ENCODE measurements at regions of chr1 and their contacts with region 1.

Region 1: DNA sequence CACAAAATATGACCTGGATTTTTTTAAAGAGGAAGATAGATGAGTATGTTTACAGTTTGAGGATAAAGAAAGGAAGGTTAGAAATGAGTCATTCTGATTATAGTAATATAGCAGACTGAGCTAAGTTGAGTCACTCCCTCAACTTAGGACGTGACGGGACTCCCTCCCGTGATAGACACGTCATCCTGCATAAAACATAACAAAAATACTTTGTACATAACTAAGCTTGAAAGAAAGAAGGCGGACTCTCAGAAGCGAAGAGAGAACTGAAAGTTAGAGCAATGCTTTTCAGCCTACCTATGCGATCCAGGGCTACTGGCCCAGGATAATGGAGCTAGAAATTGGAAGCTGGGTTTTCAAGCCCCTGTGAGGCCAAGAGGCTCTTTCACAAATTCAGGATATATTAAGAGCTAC is 53.0 kb upstream of the DESI2 start:
- DNase-seq: peak; percentile 64
- H3K4me3 Mint-ChIP-seq: peak overlapping the region; percentile 62
- H3K27ac Mint-ChIP-seq: peak overlapping the region; percentile 80
- H3K4me1 Mint-ChIP-seq: peaks cover 20% of the 10 kb centered on the region
- H3K27me3 Mint-ChIP-seq: no peaks in the 10 kb centered on the region
- CTCF ChIP-seq: no peak

Region 2: DNA sequence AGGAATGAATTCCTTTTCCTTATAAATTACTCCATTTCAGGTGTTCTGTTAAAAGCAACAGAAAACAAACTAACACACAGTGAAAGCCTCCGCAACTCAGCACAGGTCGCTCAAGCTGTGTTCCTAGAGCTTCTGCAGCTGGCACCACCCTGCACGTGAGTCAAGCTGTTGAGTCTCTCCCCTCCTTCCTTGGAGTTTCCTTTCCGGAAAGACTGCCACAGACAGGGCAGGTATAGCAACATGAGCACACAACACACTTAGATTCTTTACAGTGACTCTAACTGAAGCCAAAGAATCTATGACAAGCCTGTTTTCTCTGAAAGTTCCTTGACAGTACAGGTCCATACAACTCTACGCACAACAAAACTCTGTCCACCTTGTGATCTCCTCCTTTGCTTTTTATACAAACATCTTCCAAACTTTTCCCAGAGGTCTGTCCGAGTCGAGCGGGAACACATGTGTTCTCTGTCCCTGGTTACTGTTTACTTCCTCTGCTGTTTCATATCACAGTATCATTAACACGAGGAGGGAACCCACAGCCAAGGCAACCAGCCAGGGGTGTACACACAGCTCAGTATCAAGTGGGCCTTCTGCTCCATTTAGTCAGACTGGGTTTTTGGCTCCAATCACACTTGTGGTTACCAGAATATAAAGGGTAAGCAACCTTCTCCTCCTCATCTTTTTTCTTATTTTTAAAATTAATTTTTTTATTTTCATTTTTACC is 14.3 kb after region 1 on chr1:
- CTCF ChIA-PET with region 1: interaction called, 10 read pairs
- intact Hi-C with region 1: no loop called
- DNase-seq: peak; percentile 46
- H3K4me3 Mint-ChIP-seq: peak overlapping the region; percentile 5
- H3K27ac Mint-ChIP-seq: peak overlapping the region; percentile 46
- H3K4me1 Mint-ChIP-seq: peaks cover 25% of the 10 kb centered on the region
- H3K27me3 Mint-ChIP-seq: no peaks in the 10 kb centered on the region
- CTCF ChIP-seq: no peak

Region 3: GRCh38 chr1:244652699-244653466 is 52.9 kb after region 1 on chr1 and contains the start of gene DESI2:
- CTCF ChIA-PET with region 1: interaction called, 4 read pairs
- intact Hi-C with region 1: loop called (anchors 1 kb)
- DNase-seq: peak; percentile 98
- H3K4me3 Mint-ChIP-seq: no peak within 1 kb of the TSS
- H3K27ac Mint-ChIP-seq: no peak within 1 kb of the TSS
- H3K4me1 Mint-ChIP-seq: peaks cover 7% of the 10 kb centered on the region
- H3K27me3 Mint-ChIP-seq: peaks cover 20% of the 10 kb centered on the region
- CTCF ChIP-seq: peak; percentile 77
- total RNA-seq, gene DESI2: 29.8 and 39.1 TPM in 2 replicates

Region 4: GRCh38 chr1:244678697-244679096 is 78.8 kb after region 1 on chr1:
- CTCF ChIA-PET with region 1: no interaction called
- intact Hi-C with region 1: no loop called
- DNase-seq: no peak
- H3K4me3 Mint-ChIP-seq: no peak overlapping the region
- H3K27ac Mint-ChIP-seq: no peak overlapping the region
- H3K4me1 Mint-ChIP-seq: no peaks in the 10 kb centered on the region
- H3K27me3 Mint-ChIP-seq: no peaks in the 10 kb centered on the region
- CTCF ChIP-seq: no peak

Region 5: DNA sequence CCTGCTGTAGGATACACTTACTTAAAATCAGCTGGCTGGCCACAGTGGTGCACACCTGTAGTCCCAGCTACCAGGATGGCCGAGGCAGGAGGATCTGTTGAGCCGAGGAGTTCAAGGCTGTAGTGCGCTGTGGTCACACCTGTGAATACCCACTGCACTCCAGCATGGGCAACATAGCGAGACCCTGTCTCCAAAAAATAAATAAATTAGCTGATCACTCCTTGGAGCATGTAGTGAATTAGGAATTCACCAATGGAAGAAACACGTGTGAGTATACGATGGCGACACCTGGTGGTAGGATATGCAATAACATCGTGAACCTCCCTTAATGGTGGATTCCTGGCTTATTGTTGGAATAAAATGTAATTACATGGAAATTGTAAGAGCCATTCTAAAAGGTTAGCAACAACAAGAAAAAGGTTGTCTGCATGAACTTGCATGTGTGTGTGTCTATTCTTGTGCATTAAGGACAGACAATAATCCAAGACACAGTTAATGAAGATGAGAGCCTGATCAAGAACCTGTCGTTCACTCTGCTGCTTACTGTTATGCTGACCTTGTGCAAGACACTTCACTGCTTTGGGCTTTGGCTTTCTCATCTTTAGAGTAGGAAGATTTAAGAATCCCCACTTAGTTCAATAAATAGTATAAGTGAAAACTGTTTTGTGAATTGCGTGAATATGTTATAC is 196.9 kb after region 1 on chr1:
- CTCF ChIA-PET with region 1: interaction called, 16 read pairs
- intact Hi-C with region 1: loop called (anchors 1 kb)
- DNase-seq: peak; percentile 79
- H3K4me3 Mint-ChIP-seq: no peak overlapping the region
- H3K27ac Mint-ChIP-seq: no peak overlapping the region
- H3K4me1 Mint-ChIP-seq: peaks cover 10% of the 10 kb centered on the region
- H3K27me3 Mint-ChIP-seq: no peaks in the 10 kb centered on the region
- CTCF ChIP-seq: peak; percentile 88